Ovary (tissue), 10 donors: ENCODE measurements at regions of chr7 and their contacts with region 1.

Region 1: DNA sequence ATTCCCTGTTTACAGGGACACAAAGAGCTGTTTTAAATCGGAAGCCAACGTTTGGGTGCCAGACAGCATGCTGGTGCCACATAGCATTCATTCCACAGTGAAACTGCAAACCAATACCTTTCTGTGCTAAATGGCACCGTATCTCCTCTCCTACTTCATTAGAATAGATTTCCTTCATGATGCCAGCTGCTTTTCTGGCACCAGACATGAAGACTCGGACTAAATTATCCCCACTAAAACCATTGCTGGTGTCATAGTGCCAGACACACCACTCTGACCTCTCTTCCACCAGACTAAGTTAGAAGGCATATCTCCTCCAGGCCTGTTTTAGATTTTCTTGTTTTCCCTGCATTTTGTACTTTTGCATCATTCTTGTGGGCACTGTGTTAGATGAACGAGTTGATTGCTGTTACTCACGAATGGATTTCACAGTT is 155.1 kb downstream of the ETV1 start:
- DNase-seq: no peak
- H3K4me3 ChIP-seq: no peak overlapping the region
- H3K27ac ChIP-seq: no peak overlapping the region
- H3K4me1 ChIP-seq: no peaks in the 10 kb centered on the region
- H3K27me3 ChIP-seq: no peaks in the 10 kb centered on the region
- CTCF ChIP-seq: no peak
- EP300 ChIP-seq: no peak
- POLR2A ChIP-seq: no peak

Region 2: GRCh38 chr7:13800694-13801448 is 33.5 kb before region 1 on chr7:
- intact Hi-C with region 1: no loop called
- DNase-seq: no peak
- H3K4me3 ChIP-seq: no peak overlapping the region
- H3K27ac ChIP-seq: no peak overlapping the region
- H3K4me1 ChIP-seq: no peaks in the 10 kb centered on the region
- H3K27me3 ChIP-seq: no peaks in the 10 kb centered on the region
- CTCF ChIP-seq: no peak
- EP300 ChIP-seq: no peak
- POLR2A ChIP-seq: no peak

Region 3: DNA sequence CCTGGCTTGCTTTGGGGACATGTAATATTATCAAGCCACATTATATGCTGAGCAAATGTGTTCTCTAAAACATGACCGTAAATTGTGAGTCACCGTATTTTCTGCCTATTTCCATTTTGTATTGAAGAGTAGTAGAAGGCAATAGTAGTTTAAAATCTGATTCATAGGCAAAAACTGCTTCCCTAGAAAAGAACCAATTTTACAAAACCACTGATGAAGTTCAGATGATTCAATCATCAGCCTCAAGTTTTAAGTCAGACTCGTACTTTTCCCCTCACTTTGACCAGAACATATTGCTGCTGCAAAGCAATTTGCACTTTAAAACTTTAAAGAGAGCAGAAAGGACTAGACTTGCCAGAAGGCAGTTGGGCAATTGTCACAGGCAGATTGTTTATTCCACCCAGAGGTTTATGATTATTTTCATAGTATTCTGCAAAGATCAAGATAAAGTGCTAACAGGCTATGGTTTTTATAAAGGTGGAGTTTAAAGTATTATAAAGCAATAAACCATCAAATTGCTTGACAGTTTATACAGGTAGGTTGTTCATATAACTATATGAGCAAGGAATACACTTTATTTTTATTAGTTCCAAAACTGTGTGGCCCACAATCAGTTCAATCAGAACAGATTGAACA is 13.1 kb before region 1 on chr7:
- intact Hi-C with region 1: loop called in 1 of 4 experiments (anchors 1 kb)
- DNase-seq: no peak
- H3K4me3 ChIP-seq: no peak overlapping the region
- H3K27ac ChIP-seq: no peak overlapping the region
- H3K4me1 ChIP-seq: no peaks in the 10 kb centered on the region
- H3K27me3 ChIP-seq: no peaks in the 10 kb centered on the region
- CTCF ChIP-seq: no peak
- EP300 ChIP-seq: no peak
- POLR2A ChIP-seq: no peak

Region 4: GRCh38 chr7:13981070-13981469 is 146.7 kb after region 1 on chr7:
- intact Hi-C with region 1: no loop called
- DNase-seq: no peak
- H3K4me3 ChIP-seq: no peak overlapping the region
- H3K27ac ChIP-seq: no peak overlapping the region
- H3K4me1 ChIP-seq: no peaks in the 10 kb centered on the region
- H3K27me3 ChIP-seq: no peaks in the 10 kb centered on the region
- CTCF ChIP-seq: no peak
- EP300 ChIP-seq: no peak
- POLR2A ChIP-seq: no peak

Region 5: GRCh38 chr7:14170872-14171271 is 336.5 kb after region 1 on chr7:
- intact Hi-C with region 1: no loop called
- DNase-seq: no peak
- H3K4me3 ChIP-seq: no peak overlapping the region
- H3K27ac ChIP-seq: no peak overlapping the region
- H3K4me1 ChIP-seq: no peaks in the 10 kb centered on the region
- H3K27me3 ChIP-seq: no peaks in the 10 kb centered on the region
- CTCF ChIP-seq: no peak
- EP300 ChIP-seq: no peak
- POLR2A ChIP-seq: no peak